HepG2 (cell line): ENCODE measurements at regions of chr5 and their contacts with region 1.

Region 1: GRCh38 chr5:95759634-95760033 is 28.5 kb downstream of the RHOBTB3 start:
- DNase-seq: peak; percentile 95
- ATAC-seq: peak; percentile 93
- H3K4me3 ChIP-seq: peak overlapping the region; percentile 1 to 66 (median 52); a peak in 3 of 6 replicates
- H3K27ac ChIP-seq: peak overlapping the region; percentile 67
- H3K4me1 ChIP-seq: peaks cover 43% of the 10 kb centered on the region
- H3K27me3 ChIP-seq: no peaks in the 10 kb centered on the region
- CTCF ChIP-seq: no peak
- EP300 ChIP-seq: peak in 1 of 2 experiments; percentile 78; a peak in 2 of 4 replicates
- POLR2A ChIP-seq: no peak
- RAD21 ChIP-seq: no peak

Region 2: GRCh38 chr5:95730730-95731570 is 28.7 kb before region 1 on chr5 and contains the start of gene RHOBTB3:
- CTCF ChIA-PET with region 1: no interaction called
- POLR2A ChIA-PET with region 1: interaction called, 18 read pairs
- in situ Hi-C with region 1: no loop called
- intact Hi-C with region 1: loop called (anchors 1 kb)
- DNase-seq: peak; percentile 79
- ATAC-seq: peak; percentile 87
- H3K4me3 ChIP-seq: peak within 1 kb of the TSS; percentile 80 to 93 (median 87)
- H3K27ac ChIP-seq: peak within 1 kb of the TSS; percentile 65
- H3K4me1 ChIP-seq: peaks cover 72% of the 10 kb centered on the region
- H3K27me3 ChIP-seq: no peaks in the 10 kb centered on the region
- CTCF ChIP-seq: peak; percentile 17; the same call in 1 of the 2 replicates
- EP300 ChIP-seq: peak in 1 of 2 experiments; percentile 49; a peak in 1 of 4 replicates
- POLR2A ChIP-seq: peak; percentile 41 to 44; a peak in 2 of 4 replicates
- RAD21 ChIP-seq: peak; percentile 49; the same call in 1 of the 2 replicates
- total RNA-seq, gene RHOBTB3: 35.4 and 39.6 TPM in 2 replicates